ENCODE measurements at regions of chr13 and their contacts with region 1.

Region 1: DNA sequence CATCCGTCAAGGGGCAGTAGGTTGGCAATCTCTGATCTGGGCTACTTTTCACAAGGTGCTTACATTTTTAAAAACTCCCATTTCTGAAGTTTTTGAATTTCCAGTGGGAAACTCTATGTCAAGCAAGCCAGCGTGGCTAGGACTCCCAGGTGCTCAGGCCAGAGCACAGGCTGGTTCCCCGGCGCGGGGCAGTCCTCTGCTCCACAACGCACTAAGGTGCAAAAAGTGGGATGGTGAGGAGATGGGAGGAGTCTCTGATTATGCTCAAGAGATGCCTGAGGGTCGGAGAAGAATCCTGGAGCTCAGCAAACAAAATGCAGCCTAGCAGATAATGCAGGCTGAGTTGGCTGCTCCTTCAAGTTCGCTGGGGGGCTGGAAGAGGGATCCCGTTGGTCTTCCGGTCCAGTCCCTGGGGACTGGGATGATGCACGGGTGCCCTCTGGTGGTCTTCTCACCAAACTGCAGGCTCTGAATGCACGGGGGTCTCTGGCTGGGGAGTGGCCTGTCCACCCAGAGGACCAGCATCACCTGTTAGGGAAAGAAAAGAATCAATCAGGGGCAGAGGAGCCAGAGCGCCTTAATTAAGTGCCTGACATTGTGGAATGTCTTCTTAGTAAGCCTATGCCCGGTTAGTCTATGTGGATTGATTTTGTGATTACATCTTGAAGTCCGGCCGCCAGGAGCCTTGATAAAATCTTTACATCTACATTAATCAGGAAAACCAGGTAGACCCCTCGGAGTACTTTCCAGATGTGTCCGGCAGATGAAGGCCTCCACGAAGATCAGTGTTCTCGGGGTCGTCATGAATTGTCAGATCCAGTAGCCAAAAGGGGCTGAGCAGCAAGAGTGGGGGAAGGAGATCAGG is 244.4 kb upstream of the MAB21L1 start:
- DNase-seq: peak; percentile 46
- ATAC-seq: peak; percentile 87
- H3K4me3 ChIP-seq: no peak overlapping the region; the same call in 1 of the 2 replicates
- H3K27ac ChIP-seq: no peak overlapping the region
- H3K4me1 ChIP-seq: peaks cover 10% of the 10 kb centered on the region
- H3K27me3 ChIP-seq: no peaks in the 10 kb centered on the region
- CTCF ChIP-seq: peak; percentile 95
- POLR2A ChIP-seq: no peak
- RAD21 ChIP-seq: peak; percentile 97

Region 2: GRCh38 chr13:35210261-35210660 is 510.7 kb before region 1 on chr13:
- CTCF ChIA-PET with region 1: no interaction called
- POLR2A ChIA-PET with region 1: no interaction called
- dilution Hi-C with region 1: no loop called
- in situ Hi-C with region 1: no loop called
- intact Hi-C with region 1: loop called (anchors 5 kb)
- DNase-seq: no peak
- ATAC-seq: no peak
- H3K4me3 ChIP-seq: no peak overlapping the region
- H3K27ac ChIP-seq: no peak overlapping the region
- H3K4me1 ChIP-seq: no peaks in the 10 kb centered on the region
- H3K27me3 ChIP-seq: no peaks in the 10 kb centered on the region
- CTCF ChIP-seq: no peak
- POLR2A ChIP-seq: no peak
- RAD21 ChIP-seq: no peak

Region 3: DNA sequence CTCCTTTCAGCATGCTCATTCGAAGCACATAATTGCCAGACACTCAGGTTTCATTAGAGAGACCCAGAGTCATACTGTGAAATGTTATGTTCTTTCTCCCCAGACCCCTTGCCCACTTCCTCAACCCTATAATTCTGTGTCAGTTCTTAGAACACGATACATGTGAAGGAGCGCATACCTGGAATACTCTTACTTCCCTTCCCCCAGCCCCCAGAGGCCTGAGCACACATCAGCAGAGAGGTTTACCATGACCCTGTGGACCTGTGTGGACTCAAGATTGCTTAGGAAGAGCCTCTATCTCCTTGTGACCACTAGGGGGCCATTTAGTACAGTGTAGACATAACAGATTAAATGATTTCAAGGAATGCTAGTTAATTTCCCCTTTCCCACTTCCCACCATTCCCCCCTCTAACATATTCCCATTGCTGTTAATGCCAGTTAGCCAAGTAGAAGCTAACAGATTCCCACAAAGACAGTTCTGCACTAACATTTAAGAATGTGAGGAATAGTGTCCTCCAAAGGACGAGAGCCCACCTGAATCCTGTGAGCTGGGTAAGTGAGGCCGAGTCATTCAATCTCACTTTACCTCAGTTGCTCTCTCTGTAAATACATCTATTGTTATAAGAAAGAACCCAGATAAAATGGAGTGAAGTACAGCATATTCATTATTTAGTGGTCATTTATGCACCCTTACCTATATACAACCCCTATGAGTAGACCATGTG is 90.2 kb before region 1 on chr13:
- CTCF ChIA-PET with region 1: interaction called, 11 read pairs
- POLR2A ChIA-PET with region 1: no interaction called
- dilution Hi-C with region 1: no loop called
- in situ Hi-C with region 1: no loop called
- intact Hi-C with region 1: loop called (anchors 1 kb)
- DNase-seq: peak; percentile 70
- ATAC-seq: peak; percentile 98
- H3K4me3 ChIP-seq: no peak overlapping the region
- H3K27ac ChIP-seq: no peak overlapping the region
- H3K4me1 ChIP-seq: no peaks in the 10 kb centered on the region
- H3K27me3 ChIP-seq: no peaks in the 10 kb centered on the region
- CTCF ChIP-seq: peak; percentile 68
- POLR2A ChIP-seq: no peak
- RAD21 ChIP-seq: peak; percentile 66

Region 4: GRCh38 chr13:35704331-35704730 is 16.6 kb before region 1 on chr13:
- CTCF ChIA-PET with region 1: no interaction called
- POLR2A ChIA-PET with region 1: no interaction called
- dilution Hi-C with region 1: no loop called
- in situ Hi-C with region 1: no loop called
- intact Hi-C with region 1: no loop called
- DNase-seq: peak; percentile 19
- ATAC-seq: no peak
- H3K4me3 ChIP-seq: no peak overlapping the region
- H3K27ac ChIP-seq: peak overlapping the region; percentile 34; the same call in 1 of the 2 replicates
- H3K4me1 ChIP-seq: peaks cover 16% of the 10 kb centered on the region
- H3K27me3 ChIP-seq: no peaks in the 10 kb centered on the region
- CTCF ChIP-seq: no peak
- POLR2A ChIP-seq: no peak
- RAD21 ChIP-seq: no peak

Region 5: GRCh38 chr13:35818633-35819067 is 97.7 kb after region 1 on chr13:
- CTCF ChIA-PET with region 1: no interaction called
- POLR2A ChIA-PET with region 1: no interaction called
- dilution Hi-C with region 1: no loop called
- in situ Hi-C with region 1: no loop called
- intact Hi-C with region 1: loop called (anchors 2 kb)
- DNase-seq: peak; percentile 60
- ATAC-seq: peak; percentile 77
- H3K4me3 ChIP-seq: no peak overlapping the region
- H3K27ac ChIP-seq: no peak overlapping the region
- H3K4me1 ChIP-seq: no peaks in the 10 kb centered on the region
- H3K27me3 ChIP-seq: no peaks in the 10 kb centered on the region; the same call in 1 of the 2 replicates
- CTCF ChIP-seq: peak; percentile 68
- POLR2A ChIP-seq: no peak
- RAD21 ChIP-seq: peak; percentile 61

Measured in IMR-90 (cell line).